ENCODE measurements at regions of chr7 and their contacts with region 1.

Region 1: GRCh38 chr7:5406957-5407945 is 16.4 kb downstream of the TNRC18 start:
- DNase-seq: no peak
- H3K4me3 ChIP-seq: no peak overlapping the region
- H3K27me3 ChIP-seq: no peaks in the 10 kb centered on the region
- CTCF ChIP-seq: no peak

Region 2: GRCh38 chr7:5255832-5256231 is 151.4 kb before region 1 on chr7:
- CTCF ChIA-PET with region 1: no interaction called
- POLR2A ChIA-PET with region 1: no interaction called
- DNase-seq: no peak
- H3K4me3 ChIP-seq: no peak overlapping the region
- H3K27me3 ChIP-seq: no peaks in the 10 kb centered on the region
- CTCF ChIP-seq: no peak

Region 3: GRCh38 chr7:5423844-5424688 is 16.8 kb after region 1 on chr7:
- CTCF ChIA-PET with region 1: no interaction called
- POLR2A ChIA-PET with region 1: interaction called, 11 read pairs
- DNase-seq: peak; percentile 89
- H3K4me3 ChIP-seq: peak overlapping the region; percentile 82
- H3K27me3 ChIP-seq: no peaks in the 10 kb centered on the region
- CTCF ChIP-seq: no peak

Measured in BJ (cell line).